ENCODE measurements at regions of chr6 and their contacts with region 1.

Region 1: DNA sequence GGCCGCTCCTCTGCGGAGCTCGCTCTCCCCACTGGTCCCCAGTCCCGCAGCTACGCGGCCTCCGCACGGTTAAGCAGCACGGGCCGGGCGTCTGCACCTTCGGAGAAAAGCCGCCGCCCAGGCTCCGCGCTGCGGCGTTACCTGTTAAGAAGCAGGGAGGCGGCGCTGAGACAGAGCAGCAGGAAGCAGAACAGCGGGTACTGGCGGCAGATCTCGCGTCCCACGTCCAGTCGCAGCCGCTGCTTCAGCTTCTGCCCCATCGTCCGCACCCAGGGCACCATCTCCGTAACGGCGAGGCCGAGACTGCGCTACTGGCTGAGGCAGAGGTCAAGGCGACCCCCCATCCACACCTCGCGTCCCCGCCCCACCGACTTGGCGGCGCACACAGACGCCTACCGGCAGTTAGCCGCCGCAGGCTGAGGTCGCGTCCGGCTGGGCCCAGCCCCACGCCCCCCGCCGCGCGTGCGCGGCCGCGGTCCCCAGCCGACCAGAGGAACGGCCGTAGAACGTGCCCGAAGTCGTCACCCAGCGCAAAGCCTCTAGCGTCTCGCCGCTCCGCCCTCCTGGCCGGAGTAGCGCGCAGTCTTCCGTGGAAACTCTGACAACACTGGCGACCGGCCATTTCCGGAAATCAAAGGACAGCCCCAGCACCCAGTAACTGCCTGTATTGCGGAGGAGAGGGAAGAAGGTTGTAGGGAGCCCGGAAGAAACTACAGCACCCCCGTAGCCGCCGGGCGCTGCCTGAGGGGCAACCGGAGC is at the start of gene SNX14:
- DNase-seq: peak; percentile 52 to 83 (median 68)
- ATAC-seq: peak; percentile 79 to 80 (median 80)
- H3K4me3 ChIP-seq: peak within 1 kb of the TSS; percentile 80 to 88
- H3K4me3 Mint-ChIP-seq: peak within 1 kb of the TSS; percentile 89 to 97 (median 96)
- H3K27ac ChIP-seq: peak within 1 kb of the TSS; percentile 73
- H3K27ac Mint-ChIP-seq: peak within 1 kb of the TSS; percentile 94 to 97
- H3K4me1 ChIP-seq: peaks cover 11 to 20% of the 10 kb centered on the region in 2 experiments
- H3K4me1 Mint-ChIP-seq: peaks cover 50 to 54% (median 51%) of the 10 kb centered on the region in 3 donors
- H3K27me3 ChIP-seq: no peaks in the 10 kb centered on the region
- H3K27me3 Mint-ChIP-seq: no peaks in the 10 kb centered on the region
- total RNA-seq, gene SNX14: 46.3 to 63.3 (median 53.7) TPM

Region 2: DNA sequence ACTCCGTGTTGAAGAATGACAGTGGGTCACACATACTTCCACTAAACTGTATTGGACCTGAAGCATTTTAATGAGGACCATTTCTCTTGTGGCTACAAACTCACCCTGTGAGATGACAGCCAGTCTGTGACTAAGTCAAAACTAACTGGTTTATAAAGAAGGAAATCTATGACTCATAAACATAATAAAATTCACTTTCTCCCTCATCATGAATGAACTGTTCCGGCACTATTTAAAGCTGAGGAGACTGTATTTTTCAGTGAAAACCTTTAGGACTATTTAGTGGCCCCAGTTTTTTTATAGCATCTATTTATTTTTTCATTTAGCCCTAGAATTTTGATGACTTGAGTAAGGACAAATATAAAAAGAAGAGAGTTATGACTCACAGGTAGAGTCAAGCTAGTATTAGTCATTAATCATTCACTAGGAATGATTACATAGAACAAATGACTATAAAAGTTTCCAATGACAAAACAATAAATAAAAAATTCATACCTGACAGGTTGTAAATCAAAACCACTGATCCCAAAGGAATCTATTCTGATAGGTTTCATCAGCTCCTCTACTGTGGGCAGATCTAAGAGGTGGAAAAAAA is 1400.4 kb before region 1 on chr6:
- CTCF ChIA-PET with region 1: interaction called in 1 of 2 experiments, 11 read pairs
- POLR2A ChIA-PET with region 1: no interaction called
- DNase-seq: no peak
- ATAC-seq: no peak
- H3K4me3 ChIP-seq: no peak overlapping the region
- H3K4me3 Mint-ChIP-seq: no peak overlapping the region
- H3K27ac ChIP-seq: no peak overlapping the region
- H3K27ac Mint-ChIP-seq: no peak overlapping the region
- H3K4me1 ChIP-seq: no peaks in the 10 kb centered on the region
- H3K4me1 Mint-ChIP-seq: no peaks in the 10 kb centered on the region
- H3K27me3 ChIP-seq: no peaks in the 10 kb centered on the region
- H3K27me3 Mint-ChIP-seq: no peaks in the 10 kb centered on the region

Region 3: DNA sequence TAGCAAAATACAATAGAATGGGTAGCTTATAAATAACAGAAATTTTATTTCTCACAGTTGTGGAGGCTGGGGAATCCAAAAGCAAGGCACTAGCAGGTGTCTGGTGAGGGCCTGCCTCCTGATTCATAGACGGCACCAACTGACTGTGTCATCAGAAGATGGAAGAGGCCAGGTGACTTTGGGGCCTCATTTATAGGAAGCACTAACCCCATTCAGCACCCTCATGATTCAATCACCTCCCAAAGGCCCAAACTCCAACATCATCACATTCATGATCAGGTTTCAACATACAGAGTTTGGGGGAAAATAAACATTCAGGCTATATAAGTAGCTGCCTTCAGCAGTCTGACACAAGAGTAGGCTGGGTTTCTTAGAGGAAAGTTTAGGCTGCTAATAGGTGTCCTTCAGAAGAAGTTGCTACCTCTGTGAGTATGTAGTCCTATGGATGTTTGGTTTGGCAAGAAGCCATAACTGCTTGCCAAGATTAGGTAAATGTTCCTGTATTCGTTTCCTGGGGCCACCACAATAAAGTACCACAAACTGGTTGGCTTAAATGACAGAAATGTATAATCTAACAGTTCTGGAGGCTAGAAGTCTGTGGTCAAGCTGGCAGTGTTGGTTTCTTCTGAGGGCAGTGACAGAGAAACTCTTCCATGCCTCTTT is 94.9 kb before region 1 on chr6:
- CTCF ChIA-PET with region 1: interaction called in 1 of 2 experiments, 11 read pairs
- POLR2A ChIA-PET with region 1: no interaction called
- DNase-seq: peak in 1 of 35 experiments; percentile 14
- ATAC-seq: peak in 1 of 4 experiments; percentile 46
- H3K4me3 ChIP-seq: no peak overlapping the region
- H3K4me3 Mint-ChIP-seq: no peak overlapping the region
- H3K27ac ChIP-seq: no peak overlapping the region
- H3K27ac Mint-ChIP-seq: no peak overlapping the region
- H3K4me1 ChIP-seq: no peaks in the 10 kb centered on the region
- H3K4me1 Mint-ChIP-seq: peaks cover 9 to 20% (median 15%) of the 10 kb centered on the region in 3 donors
- H3K27me3 ChIP-seq: no peaks in the 10 kb centered on the region
- H3K27me3 Mint-ChIP-seq: no peaks in the 10 kb centered on the region

Region 4: DNA sequence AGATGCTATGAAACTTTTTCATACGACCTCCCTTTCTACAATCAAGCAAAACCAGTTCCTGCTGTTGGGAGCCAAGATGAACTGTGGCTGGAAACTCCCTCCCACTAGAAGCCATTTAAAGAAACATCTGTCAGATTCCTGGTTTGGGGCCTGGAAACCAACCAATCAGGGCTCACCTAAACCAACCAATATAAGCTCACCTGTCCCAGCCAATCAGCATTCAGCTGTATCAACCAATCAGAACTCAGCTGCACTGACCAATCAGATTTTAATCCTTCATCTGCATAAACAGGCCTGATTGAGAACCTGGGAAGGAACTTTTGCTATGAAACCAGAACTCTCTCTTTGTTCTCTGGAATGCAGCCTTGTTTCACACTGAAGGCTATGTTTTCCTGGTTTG is 42.4 kb before region 1 on chr6:
- CTCF ChIA-PET with region 1: no interaction called
- POLR2A ChIA-PET with region 1: no interaction called
- DNase-seq: peak in 1 of 35 experiments; percentile 5
- ATAC-seq: no peak
- H3K4me3 ChIP-seq: no peak overlapping the region
- H3K4me3 Mint-ChIP-seq: no peak overlapping the region
- H3K27ac ChIP-seq: no peak overlapping the region
- H3K27ac Mint-ChIP-seq: peak overlapping the region in 1 of 2 donors; percentile 16
- H3K4me1 ChIP-seq: no peaks in the 10 kb centered on the region
- H3K4me1 Mint-ChIP-seq: peaks cover 0 to 2% (median 0%) of the 10 kb centered on the region in 3 donors
- H3K27me3 ChIP-seq: no peaks in the 10 kb centered on the region
- H3K27me3 Mint-ChIP-seq: no peaks in the 10 kb centered on the region

Region 5: GRCh38 chr6:85642774-85643536 is 49.3 kb after region 1 on chr6 and contains the start of gene SYNCRIP:
- CTCF ChIA-PET with region 1: interaction called in 1 of 2 experiments, 8 read pairs
- POLR2A ChIA-PET with region 1: interaction called, 6 to 11 read pairs
- DNase-seq: peak; percentile 96 to 99 (median 98)
- ATAC-seq: peak; percentile 81 to 86 (median 82)
- H3K4me3 ChIP-seq: peak within 1 kb of the TSS; percentile 93 to 100
- H3K4me3 Mint-ChIP-seq: peak within 1 kb of the TSS; percentile 87 to 93 (median 91)
- H3K27ac ChIP-seq: peak within 1 kb of the TSS; percentile 99
- H3K27ac Mint-ChIP-seq: peak within 1 kb of the TSS; percentile 97 to 99
- H3K4me1 ChIP-seq: peaks cover 12 to 27% of the 10 kb centered on the region in 2 experiments
- H3K4me1 Mint-ChIP-seq: peaks cover 45 to 52% (median 48%) of the 10 kb centered on the region in 3 donors
- H3K27me3 ChIP-seq: no peaks in the 10 kb centered on the region
- H3K27me3 Mint-ChIP-seq: no peaks in the 10 kb centered on the region
- total RNA-seq, gene SYNCRIP: 73.5 to 85.1 (median 80.5) TPM

Region 6: GRCh38 chr6:85678602-85679444 is 85.2 kb after region 1 on chr6:
- CTCF ChIA-PET with region 1: interaction called, 4 to 15 read pairs
- POLR2A ChIA-PET with region 1: interaction called, 32 to 51 read pairs
- DNase-seq: peak; percentile 95 to 99 (median 98)
- ATAC-seq: peak; percentile 88 to 95 (median 94)
- H3K4me3 ChIP-seq: peak overlapping the region; percentile 81 to 89
- H3K4me3 Mint-ChIP-seq: peak overlapping the region; percentile 99 to 100 (median 100)
- H3K27ac ChIP-seq: peak overlapping the region; percentile 89
- H3K27ac Mint-ChIP-seq: peak overlapping the region; percentile 98
- H3K4me1 ChIP-seq: peaks cover 14 to 32% of the 10 kb centered on the region in 2 experiments
- H3K4me1 Mint-ChIP-seq: peaks cover 42 to 50% (median 47%) of the 10 kb centered on the region in 3 donors
- H3K27me3 ChIP-seq: no peaks in the 10 kb centered on the region
- H3K27me3 Mint-ChIP-seq: no peaks in the 10 kb centered on the region